HEK293 (cell line): ENCODE measurements at regions of chr15 and their contacts with region 1.

Region 1: DNA sequence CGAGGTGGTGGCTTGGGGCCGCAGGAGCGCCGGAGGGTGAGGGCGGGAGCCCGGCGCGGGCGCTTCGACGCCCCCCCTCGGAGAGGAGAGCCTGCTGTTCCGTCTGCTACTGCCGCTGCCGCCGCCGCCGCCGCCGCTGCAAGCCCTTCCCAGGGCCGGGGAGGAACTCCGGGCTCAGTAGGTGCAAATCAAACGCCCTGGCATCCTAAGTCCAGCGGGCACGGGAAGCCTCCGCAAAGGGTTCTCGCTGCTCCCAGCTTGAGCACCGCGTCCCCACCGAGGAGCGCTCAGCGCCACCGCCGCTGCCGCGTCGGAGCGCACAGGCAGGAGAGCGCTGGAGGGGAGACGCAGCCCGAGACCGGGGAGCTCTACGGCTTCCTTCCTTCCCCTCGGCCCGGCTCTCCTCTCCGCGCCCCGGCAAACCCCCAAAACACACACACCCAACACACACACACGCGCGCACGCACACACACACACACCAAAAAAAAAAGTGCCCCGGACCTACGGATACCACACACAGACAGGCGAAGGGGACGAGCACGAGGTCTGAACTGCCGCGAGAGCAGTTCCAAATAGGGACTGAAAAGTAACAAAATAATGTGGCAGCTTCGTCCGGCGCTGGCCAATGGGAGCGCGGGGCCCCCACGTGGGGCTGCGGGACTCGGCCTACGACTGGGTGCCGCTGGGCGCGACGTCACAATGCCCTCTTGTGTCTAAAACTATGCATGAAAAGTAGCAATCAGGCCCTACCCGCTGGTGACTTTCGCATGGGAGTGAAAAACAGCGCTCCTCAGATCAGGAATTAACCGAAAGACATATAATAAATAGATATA is at the start of gene TLE3:
- H3K4me3 ChIP-seq: peak within 1 kb of the TSS; percentile 92
- H3K27ac ChIP-seq: peak within 1 kb of the TSS; percentile 99
- H3K4me1 ChIP-seq: peaks cover 34% of the 10 kb centered on the region
- CTCF ChIP-seq: peak; percentile 84

Region 2: DNA sequence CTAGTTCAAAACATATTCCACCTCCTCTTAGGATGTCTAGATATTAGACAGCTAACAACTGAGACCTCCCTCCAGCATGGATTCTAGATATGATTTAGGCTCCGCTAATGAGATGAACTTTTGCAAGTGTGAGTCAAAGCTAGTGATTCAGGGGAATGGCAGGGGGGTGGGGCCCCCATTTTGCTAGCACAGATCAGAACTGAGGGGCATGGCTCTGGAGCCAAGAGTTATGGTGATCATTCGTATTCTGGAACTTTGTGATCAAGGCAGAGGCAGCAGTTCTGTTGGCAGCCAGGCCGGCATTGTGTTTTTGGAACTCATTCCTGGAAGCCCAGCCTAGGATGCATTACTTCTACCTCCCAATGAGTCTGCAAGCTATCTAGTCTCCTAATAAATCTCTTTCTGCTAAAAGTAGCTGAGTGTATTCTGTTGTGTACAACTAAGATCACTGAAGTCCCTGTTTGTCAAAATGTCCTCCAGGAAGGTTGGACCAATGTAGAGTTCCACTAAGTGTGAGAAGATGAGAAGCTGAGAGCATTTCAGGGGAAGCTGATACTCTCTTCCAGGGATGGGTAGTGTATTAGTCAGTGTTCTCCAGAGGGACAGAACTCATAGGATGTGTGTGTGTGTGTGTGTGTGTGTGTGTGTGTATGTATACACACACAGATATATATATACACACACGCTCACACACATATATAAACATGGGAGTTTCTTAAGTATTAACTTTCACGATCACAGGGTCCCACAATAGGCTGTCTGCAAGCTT is 312.6 kb before region 1 on chr15:
- CTCF ChIA-PET with region 1: no interaction called
- POLR2A ChIA-PET with region 1: no interaction called
- H3K4me3 ChIP-seq: no peak overlapping the region
- H3K27ac ChIP-seq: no peak overlapping the region
- H3K4me1 ChIP-seq: no peaks in the 10 kb centered on the region; the same call in 1 of the 2 replicates
- CTCF ChIP-seq: no peak

Region 3: GRCh38 chr15:69951907-69952555 is 145.5 kb before region 1 on chr15:
- CTCF ChIA-PET with region 1: no interaction called
- POLR2A ChIA-PET with region 1: no interaction called
- H3K4me3 ChIP-seq: no peak overlapping the region
- H3K27ac ChIP-seq: no peak overlapping the region
- H3K4me1 ChIP-seq: no peaks in the 10 kb centered on the region
- CTCF ChIP-seq: 0 out of 2 replicates have a peak, but pooled peaks have one; percentile 9

Region 4: GRCh38 chr15:70023064-70023768 is 74.3 kb before region 1 on chr15:
- CTCF ChIA-PET with region 1: interaction called, 3 read pairs
- POLR2A ChIA-PET with region 1: interaction called, 13 read pairs
- H3K4me3 ChIP-seq: no peak overlapping the region
- H3K27ac ChIP-seq: peak overlapping the region; percentile 68; the same call in 1 of the 2 replicates
- H3K4me1 ChIP-seq: peaks cover 21% of the 10 kb centered on the region
- CTCF ChIP-seq: no peak

Region 5: DNA sequence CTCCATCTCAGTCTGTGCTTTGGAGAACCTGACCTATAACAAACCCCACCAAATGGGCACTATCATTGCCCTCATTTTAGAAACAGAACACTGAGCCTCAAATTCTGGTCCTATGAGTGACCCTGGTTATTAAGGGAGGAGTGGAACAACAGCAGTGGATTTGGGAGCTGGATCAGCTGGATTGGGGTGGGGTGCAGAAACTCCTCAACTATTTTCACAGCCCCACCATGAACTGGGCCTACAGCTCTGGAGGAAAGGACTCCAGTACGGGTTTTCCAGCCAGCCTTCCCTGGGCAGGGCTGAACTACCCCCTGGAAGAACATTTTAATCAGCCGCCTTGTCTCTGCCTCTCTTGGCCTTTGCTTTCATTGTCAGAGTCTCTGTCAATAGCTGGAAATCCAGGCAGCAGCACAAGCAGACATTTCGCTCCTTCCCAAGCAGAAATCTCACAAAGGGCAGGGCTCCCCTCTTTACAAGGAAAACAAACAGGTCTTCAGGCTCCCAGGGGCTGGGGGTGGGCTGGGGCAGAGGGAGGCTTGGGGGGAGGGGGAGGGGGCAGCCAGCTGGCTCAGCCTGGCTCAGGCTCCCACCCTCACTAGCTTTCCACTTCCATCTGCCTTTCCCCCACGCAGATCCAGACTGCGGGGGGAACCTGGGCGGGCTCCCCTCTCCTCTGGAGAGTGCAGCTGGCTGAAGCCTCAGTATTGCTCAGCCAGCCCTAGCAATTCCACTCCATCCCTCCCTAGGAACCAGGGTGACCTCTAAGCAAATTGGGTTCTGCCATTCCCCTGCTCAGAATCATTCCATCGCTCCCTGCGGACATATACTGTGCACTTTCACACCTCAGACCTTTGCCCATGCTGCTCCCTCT is 13.9 kb after region 1 on chr15:
- CTCF ChIA-PET with region 1: interaction called, 13 read pairs
- POLR2A ChIA-PET with region 1: interaction called, 134 read pairs
- H3K4me3 ChIP-seq: no peak overlapping the region
- H3K27ac ChIP-seq: peak overlapping the region; percentile 77
- H3K4me1 ChIP-seq: peaks cover 4% of the 10 kb centered on the region
- CTCF ChIP-seq: no peak

Region 6: GRCh38 chr15:70160267-70160666 is 62.7 kb after region 1 on chr15:
- CTCF ChIA-PET with region 1: no interaction called
- POLR2A ChIA-PET with region 1: interaction called, 36 read pairs
- H3K4me3 ChIP-seq: no peak overlapping the region
- H3K27ac ChIP-seq: no peak overlapping the region
- H3K4me1 ChIP-seq: peaks cover under 1% of the 10 kb centered on the region; the same call in 1 of the 2 replicates
- CTCF ChIP-seq: no peak

Region 7: DNA sequence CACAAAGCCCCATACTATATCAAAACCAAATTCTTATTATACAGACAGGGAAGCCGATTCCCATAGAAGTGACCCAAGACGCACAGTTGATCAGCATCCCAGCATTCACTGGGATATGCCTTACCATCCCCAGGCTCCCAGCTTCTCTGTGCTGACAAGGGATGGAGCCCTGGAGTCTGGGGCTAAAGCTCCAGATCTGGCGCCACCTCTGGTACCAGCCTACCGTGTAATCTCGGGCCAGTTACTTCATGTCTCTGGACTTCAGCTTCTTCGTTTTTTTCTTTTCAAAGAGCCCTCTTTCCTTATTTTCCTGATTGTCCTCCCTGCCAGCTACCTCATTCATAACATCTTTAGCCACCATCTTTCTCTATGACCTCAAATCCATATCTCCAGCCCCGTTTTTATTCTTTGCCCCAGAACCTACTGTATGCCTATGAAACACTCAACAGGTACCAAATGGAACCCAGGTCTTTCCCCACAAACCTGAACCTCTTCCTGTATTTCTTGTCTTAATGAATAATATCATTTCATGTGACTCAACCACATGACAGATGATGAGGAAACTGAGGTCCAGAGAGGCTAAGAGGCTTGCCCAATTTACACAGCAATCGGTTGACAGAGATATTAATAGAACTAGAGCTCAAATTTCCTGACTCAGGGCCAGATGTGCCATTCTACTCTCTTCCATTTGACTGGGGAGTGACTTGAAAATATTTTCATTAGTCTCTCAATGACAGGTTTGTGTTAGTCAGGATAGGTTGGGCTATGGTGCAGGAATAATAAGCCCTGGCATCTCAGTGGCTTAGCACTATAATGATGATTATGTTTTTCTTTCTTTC is 85.5 kb after region 1 on chr15:
- CTCF ChIA-PET with region 1: interaction called, 10 read pairs
- POLR2A ChIA-PET with region 1: interaction called, 16 read pairs
- H3K4me3 ChIP-seq: no peak overlapping the region
- H3K27ac ChIP-seq: no peak overlapping the region
- H3K4me1 ChIP-seq: peaks cover 5% of the 10 kb centered on the region
- CTCF ChIP-seq: peak; percentile 43; the same call in 1 of the 2 replicates

Region 8: GRCh38 chr15:70226337-70226980 is 128.9 kb after region 1 on chr15:
- CTCF ChIA-PET with region 1: no interaction called
- POLR2A ChIA-PET with region 1: no interaction called
- H3K4me3 ChIP-seq: no peak overlapping the region
- H3K27ac ChIP-seq: no peak overlapping the region
- H3K4me1 ChIP-seq: no peaks in the 10 kb centered on the region
- CTCF ChIP-seq: no peak

Region 9: DNA sequence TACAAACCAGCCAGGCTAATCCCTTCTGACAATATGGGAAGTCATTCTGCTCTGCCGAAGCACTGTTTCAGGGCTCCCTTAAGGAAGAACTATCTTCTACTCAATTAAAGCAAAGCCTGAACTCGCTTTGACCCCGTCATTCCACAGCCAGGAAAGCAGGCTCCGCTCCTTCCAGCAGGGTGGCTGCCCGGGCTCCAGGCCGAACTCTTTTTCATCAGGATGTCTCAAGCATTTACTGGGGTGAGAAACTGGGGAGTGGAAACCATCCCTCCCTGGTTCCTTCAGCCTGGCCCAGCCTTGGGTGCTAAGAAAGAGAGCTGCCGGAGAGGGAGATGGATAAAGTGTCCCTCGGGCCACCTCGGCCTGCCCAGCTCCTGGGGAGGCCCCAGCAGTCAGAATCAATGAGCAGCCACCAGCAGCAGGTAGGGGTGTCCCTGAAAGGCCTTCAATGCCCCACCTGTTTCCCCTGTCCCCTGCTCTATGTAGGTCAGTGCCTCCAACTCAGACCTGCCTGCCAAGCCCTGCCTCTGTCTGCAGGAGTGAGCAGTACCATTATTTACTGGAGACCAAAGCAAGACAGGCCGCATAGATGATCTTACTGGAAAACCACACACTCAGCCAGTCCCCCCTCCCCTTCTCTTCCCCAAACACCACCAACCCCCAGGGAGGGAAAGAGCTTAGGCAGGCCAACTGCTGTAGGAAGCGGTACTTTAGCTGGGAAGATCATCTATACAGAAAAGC is 225.7 kb after region 1 on chr15:
- CTCF ChIA-PET with region 1: interaction called, 3 read pairs
- POLR2A ChIA-PET with region 1: interaction called, 10 read pairs
- H3K4me3 ChIP-seq: no peak overlapping the region
- H3K27ac ChIP-seq: peak overlapping the region; percentile 64
- H3K4me1 ChIP-seq: peaks cover 18% of the 10 kb centered on the region
- CTCF ChIP-seq: no peak

Region 10: GRCh38 chr15:70362886-70363285 is 265.3 kb after region 1 on chr15:
- CTCF ChIA-PET with region 1: interaction called, 12 read pairs
- POLR2A ChIA-PET with region 1: interaction called, 4 read pairs
- H3K4me3 ChIP-seq: no peak overlapping the region
- H3K27ac ChIP-seq: no peak overlapping the region
- H3K4me1 ChIP-seq: no peaks in the 10 kb centered on the region
- CTCF ChIP-seq: peak; percentile 31

Region 11: DNA sequence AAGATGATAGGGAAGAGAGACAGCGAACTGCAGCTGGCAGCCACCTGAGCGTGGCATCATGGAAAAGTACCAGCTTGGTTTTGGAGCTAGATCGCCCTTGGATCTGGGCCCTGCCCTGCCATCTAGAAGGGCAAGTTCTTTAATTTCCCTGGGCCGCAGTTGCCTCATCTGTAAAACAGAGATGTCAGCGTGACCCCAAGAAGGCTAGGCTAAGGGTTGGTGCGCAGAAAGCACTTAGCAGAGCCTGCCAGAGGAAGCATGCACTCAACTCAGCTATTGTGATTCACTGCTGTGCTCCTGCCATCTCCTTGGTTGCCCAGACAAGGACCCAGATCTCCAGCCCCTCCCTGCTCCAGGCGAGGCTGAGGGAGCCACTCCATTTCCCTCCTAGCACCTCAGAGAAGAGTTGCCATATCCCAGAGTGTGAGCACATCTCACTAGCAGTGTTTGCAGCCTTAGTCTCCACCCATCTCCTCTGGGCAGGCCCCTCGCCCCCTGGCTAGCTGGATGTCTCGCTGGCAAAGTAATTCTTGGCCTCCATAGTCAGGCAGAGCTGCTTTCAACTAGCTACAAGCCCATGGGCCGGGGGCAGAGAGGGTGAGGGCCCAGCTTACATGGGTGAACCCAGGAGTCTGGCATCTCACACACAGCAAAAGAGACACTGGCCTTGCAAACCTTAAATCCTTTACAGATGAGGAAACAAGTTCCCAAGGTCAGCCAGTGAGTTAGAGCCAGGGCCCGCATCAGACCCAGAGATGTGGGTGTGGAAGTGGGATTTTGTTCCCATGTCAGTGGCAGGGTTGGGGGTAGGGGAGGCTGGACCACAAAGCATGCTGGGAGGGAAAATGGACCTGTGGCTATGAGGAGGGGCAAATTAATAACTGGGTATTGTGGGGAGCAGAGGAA is 280.8 kb after region 1 on chr15:
- CTCF ChIA-PET with region 1: no interaction called
- POLR2A ChIA-PET with region 1: no interaction called
- H3K4me3 ChIP-seq: no peak overlapping the region
- H3K27ac ChIP-seq: no peak overlapping the region
- H3K4me1 ChIP-seq: peaks cover 2% of the 10 kb centered on the region; the same call in 1 of the 2 replicates
- CTCF ChIP-seq: no peak